ENCODE measurements at regions of chr2 and their contacts with region 1.

Region 1: DNA sequence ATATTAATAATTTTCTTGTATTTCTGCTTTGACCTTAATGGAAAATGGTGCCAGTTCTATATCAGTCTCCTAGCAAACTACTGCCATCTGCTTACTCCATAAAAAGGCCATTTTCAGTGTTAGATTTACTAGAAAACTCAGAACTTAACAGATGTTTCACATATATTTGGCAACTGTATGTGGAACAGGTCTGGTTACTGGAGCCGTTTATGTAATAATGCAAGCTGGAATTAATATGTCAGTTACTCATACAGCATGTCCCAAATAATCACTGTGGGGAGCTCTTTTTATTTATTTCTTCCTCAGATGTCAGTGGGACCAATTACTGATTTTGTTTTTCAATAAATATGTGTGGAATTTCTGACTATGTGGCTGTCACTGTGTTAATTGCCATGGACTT is 1247.6 kb downstream of the CNTNAP5 start:
- DNase-seq: no peak
- ATAC-seq: no peak
- H3K4me3 ChIP-seq: no peak overlapping the region
- H3K27ac ChIP-seq: no peak overlapping the region
- H3K4me1 ChIP-seq: no peaks in the 10 kb centered on the region
- H3K27me3 ChIP-seq: no peaks in the 10 kb centered on the region
- CTCF ChIP-seq: no peak

Region 2: DNA sequence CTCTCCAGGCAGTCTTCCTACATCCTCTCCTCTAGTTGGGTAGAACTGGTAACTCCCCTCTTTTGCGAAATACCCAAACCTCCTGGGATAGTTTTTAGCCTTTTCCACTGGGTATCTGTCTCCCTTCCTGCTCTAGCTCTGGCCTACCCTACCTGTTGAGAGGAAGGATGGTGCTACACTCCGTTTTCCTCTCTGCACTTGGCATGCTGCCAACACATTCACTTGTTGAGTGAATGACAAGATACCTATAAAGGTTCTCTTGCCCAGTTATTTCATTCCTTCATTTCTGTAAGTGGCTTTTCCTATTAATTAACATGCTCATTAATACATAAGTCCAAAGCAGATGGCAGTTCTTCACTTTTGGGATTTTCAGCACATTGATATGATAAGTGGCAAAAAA is 953.7 kb before region 1 on chr2:
- CTCF ChIA-PET with region 1: interaction called, 10 read pairs
- POLR2A ChIA-PET with region 1: no interaction called
- in situ Hi-C with region 1: no loop called
- intact Hi-C with region 1: no loop called
- DNase-seq: no peak
- ATAC-seq: no peak
- H3K4me3 ChIP-seq: no peak overlapping the region
- H3K27ac ChIP-seq: no peak overlapping the region
- H3K4me1 ChIP-seq: no peaks in the 10 kb centered on the region
- H3K27me3 ChIP-seq: no peaks in the 10 kb centered on the region
- CTCF ChIP-seq: no peak

Measured in Panc1 (cell line).